Left ventricle myocardium inferior (tissue), 1 donor: ENCODE measurements at regions of chr6 and their contacts with region 1.

Region 1: DNA sequence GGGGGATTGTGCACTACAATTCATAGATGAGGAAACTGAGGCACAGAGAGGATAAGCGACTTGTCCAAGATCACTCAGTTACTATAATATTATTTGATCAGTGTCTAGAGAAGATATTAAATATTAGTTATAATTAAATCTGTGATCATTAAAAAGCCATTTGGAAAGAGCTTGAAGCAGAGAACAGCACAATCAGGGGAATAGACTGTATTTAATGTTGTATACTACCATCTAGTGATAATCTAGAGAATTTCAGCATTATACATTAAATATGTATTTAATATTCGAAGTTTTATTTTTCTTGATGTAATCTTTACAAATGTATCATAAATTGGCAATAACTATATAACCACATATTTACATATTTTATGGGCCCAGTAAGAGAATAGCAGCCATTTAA is 20.1 kb upstream of the MTCL3 start:
- DNase-seq: no peak
- H3K4me3 ChIP-seq: no peak overlapping the region
- H3K27ac ChIP-seq: no peak overlapping the region
- H3K4me1 ChIP-seq: no peaks in the 10 kb centered on the region
- H3K27me3 ChIP-seq: peaks cover 30% of the 10 kb centered on the region
- CTCF ChIP-seq: peak; percentile 49

Region 2: GRCh38 chr6:127302728-127303660 is 236.3 kb before region 1 on chr6:
- intact Hi-C with region 1: loop called (anchors 10 kb)
- DNase-seq: no peak
- H3K4me3 ChIP-seq: no peak overlapping the region
- H3K27ac ChIP-seq: no peak overlapping the region
- H3K4me1 ChIP-seq: peaks cover 33% of the 10 kb centered on the region
- H3K27me3 ChIP-seq: no peaks in the 10 kb centered on the region
- CTCF ChIP-seq: peak; percentile 79

Region 3: DNA sequence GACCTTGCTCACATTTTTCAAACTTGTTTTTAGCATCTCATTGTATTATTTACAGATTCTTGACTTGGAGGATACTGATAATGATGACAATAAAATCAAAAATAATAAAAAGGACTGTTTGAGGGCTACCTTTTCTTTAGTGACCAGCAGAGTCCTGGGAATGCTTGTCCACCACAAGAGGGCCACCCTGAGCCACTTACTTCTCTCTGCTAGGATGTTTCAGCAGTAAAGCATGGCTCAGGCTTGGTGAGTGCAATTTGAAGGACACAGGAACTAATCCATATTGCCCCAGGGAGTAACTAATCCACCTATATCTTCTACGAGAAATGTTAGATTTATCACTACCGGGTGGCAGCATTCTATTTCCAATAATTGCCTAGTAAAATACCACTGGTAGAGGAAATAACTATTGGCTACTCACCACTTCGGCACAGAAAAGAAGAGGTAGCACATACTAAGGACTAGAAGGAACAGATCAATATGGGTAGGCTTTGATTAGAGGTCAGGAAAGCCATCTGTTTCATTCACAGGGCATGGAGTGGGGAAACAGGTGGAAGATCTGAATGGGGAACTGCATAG is 74.3 kb before region 1 on chr6:
- intact Hi-C with region 1: loop called (anchors 5 kb)
- DNase-seq: peak; percentile 50
- H3K4me3 ChIP-seq: no peak overlapping the region
- H3K27ac ChIP-seq: peak overlapping the region; percentile 35
- H3K4me1 ChIP-seq: no peaks in the 10 kb centered on the region
- H3K27me3 ChIP-seq: no peaks in the 10 kb centered on the region
- CTCF ChIP-seq: peak; percentile 85

Region 4: GRCh38 chr6:127570739-127571389 is 31.6 kb after region 1 on chr6:
- intact Hi-C with region 1: no loop called
- DNase-seq: no peak
- H3K4me3 ChIP-seq: no peak overlapping the region
- H3K27ac ChIP-seq: no peak overlapping the region
- H3K4me1 ChIP-seq: no peaks in the 10 kb centered on the region
- H3K27me3 ChIP-seq: no peaks in the 10 kb centered on the region
- CTCF ChIP-seq: no peak